ENCODE measurements at regions of chr4 and their contacts with region 1.

Region 1: GRCh38 chr4:13329963-13330362 is 154.2 kb downstream of the RAB28 start:
- DNase-seq: no peak
- H3K4me3 Mint-ChIP-seq: no peak overlapping the region
- H3K27ac Mint-ChIP-seq: no peak overlapping the region
- H3K4me1 Mint-ChIP-seq: no peaks in the 10 kb centered on the region
- H3K27me3 Mint-ChIP-seq: no peaks in the 10 kb centered on the region

Region 2: DNA sequence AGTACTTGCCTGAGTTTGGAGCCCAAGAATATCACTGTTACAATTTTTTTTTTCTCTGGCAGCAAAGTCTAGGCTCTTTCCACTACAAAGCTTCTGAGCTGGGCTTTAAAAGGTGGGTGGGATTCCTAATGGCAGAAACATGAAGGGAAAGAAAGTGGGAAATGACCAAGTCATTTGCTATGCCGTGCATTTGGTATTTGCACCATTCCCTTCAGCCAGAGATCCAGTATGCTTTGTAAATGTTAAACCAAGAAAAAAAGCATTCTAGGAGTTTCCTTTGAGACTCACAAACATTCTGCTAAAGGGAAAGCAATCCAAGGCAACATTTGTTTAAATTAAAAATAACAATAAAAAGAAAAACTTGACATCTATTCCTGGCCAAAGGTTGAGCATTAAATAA is 297.0 kb before region 1 on chr4:
- intact Hi-C with region 1: no loop called
- DNase-seq: no peak
- H3K4me3 Mint-ChIP-seq: no peak overlapping the region
- H3K27ac Mint-ChIP-seq: no peak overlapping the region
- H3K4me1 Mint-ChIP-seq: no peaks in the 10 kb centered on the region
- H3K27me3 Mint-ChIP-seq: no peaks in the 10 kb centered on the region

Region 3: DNA sequence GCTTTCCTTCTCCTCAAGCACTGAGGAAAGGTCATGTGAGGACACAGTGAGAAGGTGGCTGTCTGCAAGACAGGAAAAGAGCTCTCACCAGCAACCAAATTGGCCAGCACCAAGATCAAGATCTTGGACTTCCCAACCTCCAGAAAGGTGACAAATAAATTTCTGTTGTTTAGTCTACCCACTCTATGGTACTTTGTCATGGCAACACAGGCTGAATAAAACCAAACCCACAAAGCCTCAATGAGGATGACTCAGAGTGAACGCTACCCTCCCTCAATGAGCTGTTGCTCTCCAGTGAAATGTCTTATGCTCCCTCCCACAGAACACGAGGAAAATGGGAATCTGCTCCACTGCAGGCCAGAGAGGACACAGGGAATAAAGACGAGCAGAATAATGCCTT is 89.9 kb before region 1 on chr4:
- intact Hi-C with region 1: no loop called
- DNase-seq: no peak
- H3K4me3 Mint-ChIP-seq: no peak overlapping the region
- H3K27ac Mint-ChIP-seq: no peak overlapping the region
- H3K4me1 Mint-ChIP-seq: no peaks in the 10 kb centered on the region
- H3K27me3 Mint-ChIP-seq: no peaks in the 10 kb centered on the region

Region 4: DNA sequence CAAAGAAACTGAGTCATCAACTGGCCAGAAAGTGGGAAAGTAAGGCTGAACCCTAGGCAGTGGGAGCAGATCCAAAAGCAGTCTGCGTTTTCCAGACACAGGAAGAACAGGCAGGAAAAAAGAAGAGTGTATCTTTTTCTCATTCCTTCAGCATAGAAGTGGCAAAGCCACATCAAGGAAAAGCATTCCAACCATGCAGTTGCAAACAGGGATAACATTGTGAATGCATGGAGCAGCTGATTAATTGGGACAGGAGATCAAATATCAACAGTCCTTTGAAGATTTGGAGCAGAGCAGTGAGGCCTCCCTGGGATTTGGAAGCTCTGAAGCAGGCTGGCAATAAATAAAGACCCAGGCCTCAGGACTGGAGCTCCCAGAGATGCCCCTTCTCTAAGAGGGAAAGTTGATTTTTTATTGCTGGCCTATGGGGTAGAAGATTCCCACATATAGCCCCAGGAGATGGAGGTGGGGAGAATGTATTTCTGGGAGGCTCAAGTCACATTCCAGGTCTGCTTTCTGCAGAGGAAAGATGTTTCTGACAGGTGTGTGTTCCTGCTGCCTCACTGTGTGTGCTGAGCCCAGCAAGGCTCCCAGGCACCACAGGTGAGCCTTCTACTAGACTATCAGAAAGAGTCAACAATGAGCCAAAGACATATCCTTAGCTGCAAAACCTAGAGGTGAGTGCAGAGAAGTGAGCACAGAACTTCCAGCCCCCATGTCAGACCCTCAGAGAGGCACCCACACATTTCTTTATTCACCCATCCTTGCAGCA is 68.3 kb before region 1 on chr4:
- intact Hi-C with region 1: loop called (anchors 10 kb)
- DNase-seq: peak; percentile 29
- H3K4me3 Mint-ChIP-seq: no peak overlapping the region
- H3K27ac Mint-ChIP-seq: no peak overlapping the region
- H3K4me1 Mint-ChIP-seq: no peaks in the 10 kb centered on the region
- H3K27me3 Mint-ChIP-seq: no peaks in the 10 kb centered on the region

Region 5: GRCh38 chr4:13289391-13289790 is 40.6 kb before region 1 on chr4:
- intact Hi-C with region 1: no loop called
- DNase-seq: no peak
- H3K4me3 Mint-ChIP-seq: no peak overlapping the region
- H3K27ac Mint-ChIP-seq: no peak overlapping the region
- H3K4me1 Mint-ChIP-seq: no peaks in the 10 kb centered on the region
- H3K27me3 Mint-ChIP-seq: no peaks in the 10 kb centered on the region

Region 6: GRCh38 chr4:13396161-13396560 is 66.2 kb after region 1 on chr4:
- intact Hi-C with region 1: no loop called
- DNase-seq: no peak
- H3K4me3 Mint-ChIP-seq: no peak overlapping the region
- H3K27ac Mint-ChIP-seq: no peak overlapping the region
- H3K4me1 Mint-ChIP-seq: no peaks in the 10 kb centered on the region
- H3K27me3 Mint-ChIP-seq: no peaks in the 10 kb centered on the region

Measured in activated CD4-positive, alpha-beta T cell treated with anti-CD3 and anti-CD28 coated beads, Interleukin-2, amount 10 ng/mL, durations not matched to agents 24 days and 14 days (primary cell).